Activated naive CD4-positive, alpha-beta T cell treated with anti-CD3 and anti-CD28 coated beads for 36 hours (primary cell): ENCODE measurements at regions of chr21 and their contacts with region 1.

Region 1: GRCh38 chr21:45087022-45087823 is 12.8 kb downstream of the ADARB1 start:
- DNase-seq: peak; percentile 37
- H3K4me3 Mint-ChIP-seq: peak overlapping the region; percentile 5
- H3K27ac Mint-ChIP-seq: peak overlapping the region; percentile 2
- H3K4me1 Mint-ChIP-seq: peaks cover 76% of the 10 kb centered on the region
- H3K27me3 Mint-ChIP-seq: no peaks in the 10 kb centered on the region

Region 2: GRCh38 chr21:45098867-45099266 is 11.6 kb after region 1 on chr21:
- CTCF ChIA-PET with region 1: interaction called, 6 read pairs
- intact Hi-C with region 1: loop called (anchors 1 kb)
- DNase-seq: no peak
- H3K4me3 Mint-ChIP-seq: no peak overlapping the region
- H3K27ac Mint-ChIP-seq: no peak overlapping the region
- H3K4me1 Mint-ChIP-seq: peaks cover 39% of the 10 kb centered on the region
- H3K27me3 Mint-ChIP-seq: no peaks in the 10 kb centered on the region